Activated CD4-positive, alpha-beta memory T cell treated with anti-CD3 and anti-CD28 coated beads for 36 hours (primary cell): ENCODE measurements at regions of chr13 and their contacts with region 1.

Region 1: GRCh38 chr13:40666045-40666904 is at the start of gene FOXO1:
- DNase-seq: peak; percentile 91
- H3K4me3 Mint-ChIP-seq: peak within 1 kb of the TSS; percentile 91
- H3K27ac Mint-ChIP-seq: peak within 1 kb of the TSS; percentile 96
- H3K4me1 Mint-ChIP-seq: peaks cover 34% of the 10 kb centered on the region
- H3K27me3 Mint-ChIP-seq: no peaks in the 10 kb centered on the region
- total RNA-seq, gene FOXO1: 34.2 to 34.5 TPM

Region 2: GRCh38 chr13:39777527-39778061 is 888.7 kb before region 1 on chr13:
- CTCF ChIA-PET with region 1: interaction called, 3 read pairs
- POLR2A ChIA-PET with region 1: interaction called, 5 read pairs
- intact Hi-C with region 1: loop called (anchors 2 kb)
- DNase-seq: peak; percentile 72
- H3K4me3 Mint-ChIP-seq: peak overlapping the region; percentile 4
- H3K27ac Mint-ChIP-seq: peak overlapping the region; percentile 92
- H3K4me1 Mint-ChIP-seq: peaks cover 52% of the 10 kb centered on the region
- H3K27me3 Mint-ChIP-seq: no peaks in the 10 kb centered on the region

Region 3: GRCh38 chr13:40102856-40103255 is 563.4 kb before region 1 on chr13:
- CTCF ChIA-PET with region 1: no interaction called
- POLR2A ChIA-PET with region 1: interaction called, 9 read pairs
- intact Hi-C with region 1: loop called (anchors 2 kb)
- DNase-seq: peak; percentile 97
- H3K4me3 Mint-ChIP-seq: peak overlapping the region; percentile 56
- H3K27ac Mint-ChIP-seq: peak overlapping the region; percentile 98
- H3K4me1 Mint-ChIP-seq: peaks cover 55% of the 10 kb centered on the region
- H3K27me3 Mint-ChIP-seq: no peaks in the 10 kb centered on the region

Region 4: GRCh38 chr13:40318366-40318765 is 347.9 kb before region 1 on chr13:
- CTCF ChIA-PET with region 1: interaction called, 5 read pairs
- POLR2A ChIA-PET with region 1: interaction called, 6 read pairs
- intact Hi-C with region 1: loop called (anchors 5 kb)
- DNase-seq: no peak
- H3K4me3 Mint-ChIP-seq: no peak overlapping the region
- H3K27ac Mint-ChIP-seq: no peak overlapping the region
- H3K4me1 Mint-ChIP-seq: peaks cover 60% of the 10 kb centered on the region
- H3K27me3 Mint-ChIP-seq: no peaks in the 10 kb centered on the region

Region 5: GRCh38 chr13:40517486-40518480 is 148.5 kb before region 1 on chr13:
- CTCF ChIA-PET with region 1: interaction called, 5 read pairs
- POLR2A ChIA-PET with region 1: interaction called, 18 read pairs
- intact Hi-C with region 1: loop called (anchors 1 kb)
- DNase-seq: peak; percentile 48
- H3K4me3 Mint-ChIP-seq: peak overlapping the region; percentile 61
- H3K27ac Mint-ChIP-seq: peak overlapping the region; percentile 86
- H3K4me1 Mint-ChIP-seq: peaks cover 71% of the 10 kb centered on the region
- H3K27me3 Mint-ChIP-seq: no peaks in the 10 kb centered on the region

Region 6: DNA sequence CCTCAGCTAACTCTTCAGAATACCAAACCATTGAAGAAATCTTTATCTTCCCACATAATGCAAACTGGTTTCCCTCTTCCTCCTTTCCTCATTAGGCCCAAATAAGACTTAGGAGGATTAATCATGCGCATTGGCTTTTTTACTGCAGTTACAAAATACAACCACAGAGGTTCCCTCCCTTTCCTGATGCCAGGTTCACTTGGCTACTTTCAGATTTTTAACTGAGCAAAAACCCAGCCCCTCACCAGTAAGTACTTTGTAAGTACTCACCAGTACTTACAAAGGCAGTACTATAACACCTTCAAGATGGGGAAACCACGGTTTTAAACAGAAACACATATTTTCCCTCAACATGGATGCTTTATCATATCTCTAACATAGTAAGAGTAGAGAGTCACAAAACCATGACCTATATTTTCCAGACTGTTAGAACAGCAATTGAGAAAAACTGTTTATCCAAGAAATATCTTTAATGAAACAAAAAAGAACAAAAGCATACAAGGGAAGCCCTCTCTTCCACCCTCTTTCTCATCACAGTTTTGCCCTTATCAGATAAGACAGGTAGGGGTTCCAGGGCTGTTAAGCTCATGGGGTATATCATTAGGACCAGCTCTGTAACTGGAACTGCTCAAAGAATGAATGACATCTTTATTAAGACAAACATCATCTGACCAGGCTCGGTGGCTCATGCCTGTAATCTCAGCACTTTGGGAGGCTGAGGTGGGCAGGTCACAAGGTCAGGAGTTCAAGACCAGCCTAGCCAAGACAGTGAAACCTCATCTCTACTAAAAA is 12.6 kb before region 1 on chr13:
- CTCF ChIA-PET with region 1: interaction called, 3 read pairs
- POLR2A ChIA-PET with region 1: interaction called, 39 read pairs
- intact Hi-C with region 1: loop called (anchors 1 kb)
- DNase-seq: peak; percentile 43
- H3K4me3 Mint-ChIP-seq: peak overlapping the region; percentile 70
- H3K27ac Mint-ChIP-seq: peak overlapping the region; percentile 89
- H3K4me1 Mint-ChIP-seq: peaks cover 90% of the 10 kb centered on the region
- H3K27me3 Mint-ChIP-seq: no peaks in the 10 kb centered on the region

Region 7: DNA sequence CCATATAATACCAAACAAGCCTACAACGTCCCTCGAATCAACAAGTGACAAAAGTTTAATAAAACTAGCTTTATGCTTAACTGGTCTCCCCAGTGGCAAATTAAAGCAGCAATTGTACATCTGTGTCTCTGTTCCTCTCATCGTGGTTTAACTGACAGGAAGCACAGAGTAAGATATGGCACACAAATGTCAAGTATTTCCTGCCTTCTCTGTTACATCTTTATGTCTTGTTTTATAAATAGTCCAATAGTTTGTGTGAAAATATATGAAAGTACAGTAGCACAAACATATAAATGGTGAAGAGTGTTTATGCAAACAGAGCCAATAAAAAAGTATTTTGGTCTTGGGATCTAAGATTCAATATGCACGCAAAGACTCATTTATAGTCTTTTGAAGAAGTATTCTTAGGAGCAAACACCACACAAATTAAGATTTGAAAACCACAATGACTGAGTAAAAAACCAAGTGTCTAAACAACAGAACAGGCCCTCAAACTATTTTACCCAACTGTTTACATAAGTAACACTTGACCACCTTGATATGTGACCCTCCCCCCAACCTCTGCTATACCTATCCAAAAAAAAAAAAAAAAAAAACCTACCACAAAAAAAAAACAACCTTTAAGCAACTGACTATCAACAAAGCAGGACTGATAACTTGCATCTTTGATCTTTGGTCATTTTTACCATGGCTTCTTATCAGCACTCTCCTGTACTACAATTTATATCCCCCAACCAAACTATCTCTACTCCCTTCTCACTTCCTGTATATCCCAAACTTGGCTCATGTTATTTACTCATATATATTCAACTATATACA is 338.8 kb after region 1 on chr13:
- CTCF ChIA-PET with region 1: no interaction called
- POLR2A ChIA-PET with region 1: no interaction called
- intact Hi-C with region 1: loop called (anchors 2 kb)
- DNase-seq: no peak
- H3K4me3 Mint-ChIP-seq: peak overlapping the region; percentile 64
- H3K27ac Mint-ChIP-seq: peak overlapping the region; percentile 79
- H3K4me1 Mint-ChIP-seq: peaks cover 65% of the 10 kb centered on the region
- H3K27me3 Mint-ChIP-seq: no peaks in the 10 kb centered on the region